Colonic mucosa (tissue), 4 donors: ENCODE measurements at regions of chr10 and their contacts with region 1.

Region 1: GRCh38 chr10:64379898-64380297 is 858.7 kb downstream of the REEP3 start:
- DNase-seq: peak; percentile 21
- H3K4me3 ChIP-seq: no peak overlapping the region
- H3K27ac ChIP-seq: no peak overlapping the region
- H3K4me1 ChIP-seq: no peaks in the 10 kb centered on the region
- H3K27me3 ChIP-seq: no peaks in the 10 kb centered on the region
- CTCF ChIP-seq: peak; percentile 23

Region 2: DNA sequence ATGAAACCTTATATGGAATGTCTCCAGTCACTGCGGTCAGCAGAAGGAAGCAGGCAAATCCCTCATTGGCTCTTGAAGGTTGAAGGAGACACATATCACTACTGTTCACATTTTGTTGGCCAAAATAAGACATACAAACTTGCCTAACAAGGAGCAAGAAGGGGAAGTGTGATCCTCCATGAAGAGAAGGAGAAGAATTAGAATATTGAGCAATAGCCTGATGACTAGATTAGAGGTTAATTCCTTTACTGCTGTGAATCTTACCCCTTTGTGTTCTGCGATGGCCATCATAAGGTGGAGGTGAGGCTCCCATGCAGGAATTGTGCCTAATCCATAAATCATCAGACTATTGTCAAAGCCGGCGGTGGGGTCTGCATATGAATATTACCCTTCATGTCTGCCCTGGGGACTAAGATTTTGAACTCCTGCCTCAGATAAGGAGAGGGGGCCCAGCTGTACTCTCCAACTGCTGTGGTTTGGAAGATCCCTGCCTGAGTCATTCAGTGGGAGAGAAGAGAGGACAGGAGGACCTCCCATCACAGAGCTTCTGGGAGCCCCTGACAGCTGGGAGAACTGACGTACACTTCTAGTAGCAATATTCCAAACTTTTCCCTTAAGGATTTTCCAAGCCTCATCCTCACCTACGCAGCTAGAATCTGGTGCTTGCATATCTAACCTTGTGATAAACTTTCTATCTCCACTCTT is 460.2 kb before region 1 on chr10:
- intact Hi-C with region 1: no loop called
- DNase-seq: no peak
- H3K4me3 ChIP-seq: no peak overlapping the region
- H3K27ac ChIP-seq: no peak overlapping the region
- H3K4me1 ChIP-seq: no peaks in the 10 kb centered on the region
- H3K27me3 ChIP-seq: no peaks in the 10 kb centered on the region
- CTCF ChIP-seq: no peak

Region 3: DNA sequence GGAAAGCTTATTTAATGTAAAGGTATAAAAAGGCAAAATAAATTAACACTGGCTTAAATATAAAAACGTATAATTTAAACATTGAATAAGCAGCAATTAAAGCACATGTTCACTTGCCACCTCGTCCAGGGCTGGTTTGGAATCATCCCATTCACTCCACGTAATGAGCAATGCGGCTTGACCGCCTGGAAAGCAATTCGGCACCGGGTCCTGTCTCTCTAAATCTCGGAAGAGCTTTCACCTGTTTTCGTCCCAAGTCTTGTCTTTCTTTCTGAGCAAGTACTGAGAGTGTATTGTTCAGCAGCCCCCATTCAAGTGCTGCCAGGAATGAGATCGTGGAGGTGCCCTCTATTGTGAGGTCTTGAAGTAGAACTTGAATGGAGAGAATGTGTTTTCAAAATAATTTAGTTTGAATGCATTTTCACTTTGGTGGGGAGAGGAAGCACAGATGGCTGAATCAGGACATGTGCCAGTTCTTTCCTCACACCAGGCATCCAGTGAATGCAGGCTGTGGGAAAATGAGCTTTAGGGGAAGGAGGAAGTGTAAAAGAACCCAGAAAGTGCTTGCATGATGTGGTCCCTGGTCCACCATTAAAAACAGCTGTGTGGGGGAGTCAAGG is 343.5 kb before region 1 on chr10:
- intact Hi-C with region 1: loop called (anchors 10 kb)
- DNase-seq: no peak
- H3K4me3 ChIP-seq: no peak overlapping the region
- H3K27ac ChIP-seq: no peak overlapping the region
- H3K4me1 ChIP-seq: peaks cover 5% of the 10 kb centered on the region
- H3K27me3 ChIP-seq: no peaks in the 10 kb centered on the region
- CTCF ChIP-seq: no peak

Region 4: DNA sequence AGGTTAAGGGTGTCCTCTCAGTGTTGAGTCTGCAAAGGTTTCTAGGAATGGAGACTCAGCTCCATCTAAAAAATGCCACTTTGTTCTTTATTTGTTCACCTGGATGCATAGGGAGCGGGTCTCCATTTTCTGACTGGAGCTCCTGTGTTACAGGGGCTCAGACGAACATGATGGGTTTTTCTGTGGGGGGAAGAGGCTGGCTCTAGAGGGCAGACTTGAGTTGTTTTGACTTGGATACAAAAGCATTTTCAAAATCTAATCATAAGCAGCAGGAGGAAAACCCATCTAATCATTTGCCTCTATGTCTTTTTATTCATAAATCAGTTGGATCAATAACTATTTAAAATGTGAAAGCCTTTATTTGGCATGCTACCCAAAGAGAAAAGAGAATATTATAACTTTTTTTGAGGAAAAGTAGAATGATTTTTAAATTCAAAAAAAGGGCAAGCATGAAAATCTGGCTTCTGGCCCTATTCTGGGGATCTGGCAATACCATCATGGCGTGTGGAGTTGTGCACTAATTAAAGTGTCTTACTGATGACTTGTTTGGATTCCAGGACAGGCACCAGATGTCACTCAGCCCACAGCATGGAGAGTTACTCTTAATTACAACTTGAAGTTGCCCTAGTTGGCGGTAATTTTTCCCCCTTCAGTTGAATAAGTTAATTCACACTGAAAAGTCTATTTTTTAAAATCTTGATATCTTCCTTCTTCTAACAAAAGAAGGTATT is 263.8 kb before region 1 on chr10:
- intact Hi-C with region 1: loop called (anchors 10 kb)
- DNase-seq: peak; percentile 48
- H3K4me3 ChIP-seq: no peak overlapping the region
- H3K27ac ChIP-seq: no peak overlapping the region
- H3K4me1 ChIP-seq: peaks cover 3% of the 10 kb centered on the region
- H3K27me3 ChIP-seq: no peaks in the 10 kb centered on the region
- CTCF ChIP-seq: peak; percentile 40